Caco-2 (cell line): ENCODE measurements at regions of chr2 and their contacts with region 1.

Region 1: GRCh38 chr2:67476809-67477790 is 80.0 kb downstream of the ETAA1 start:
- DNase-seq: peak in 1 of 2 experiments; percentile 28
- H3K4me3 ChIP-seq: no peak overlapping the region
- H3K4me3 Mint-ChIP-seq: no peak overlapping the region
- H3K27ac Mint-ChIP-seq: no peak overlapping the region
- H3K4me1 ChIP-seq: no peaks in the 10 kb centered on the region
- H3K4me1 Mint-ChIP-seq: no peaks in the 10 kb centered on the region
- H3K27me3 ChIP-seq: no peaks in the 10 kb centered on the region; the same call in 1 of the 2 replicates
- H3K27me3 Mint-ChIP-seq: peaks cover 4% of the 10 kb centered on the region
- CTCF ChIP-seq: peak; percentile 50 to 67

Region 2: DNA sequence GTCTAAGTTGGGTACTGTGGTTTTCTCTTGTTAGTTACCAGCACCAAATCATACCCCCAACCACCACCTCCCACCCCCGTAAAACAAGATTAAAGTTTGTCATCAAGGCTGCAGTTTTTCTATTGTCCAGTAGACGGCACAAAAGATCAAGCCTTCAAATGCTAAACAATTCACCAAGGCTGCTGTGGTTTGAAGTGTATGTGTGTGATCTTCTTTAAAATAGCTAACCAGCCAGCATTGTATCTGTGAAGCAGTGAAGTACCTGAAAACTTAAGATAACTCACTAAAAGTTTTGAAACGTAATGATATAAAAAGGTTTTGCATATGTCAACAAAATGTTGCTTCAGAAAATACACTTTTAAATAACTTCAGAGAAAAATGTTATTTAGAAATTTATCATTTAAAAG is 1048.0 kb before region 1 on chr2:
- CTCF ChIA-PET with region 1: no interaction called
- POLR2A ChIA-PET with region 1: no interaction called
- intact Hi-C with region 1: loop called (anchors 5 kb)
- DNase-seq: peak in 1 of 2 experiments; percentile 56
- H3K4me3 ChIP-seq: no peak overlapping the region
- H3K4me3 Mint-ChIP-seq: no peak overlapping the region
- H3K27ac Mint-ChIP-seq: no peak overlapping the region
- H3K4me1 ChIP-seq: peaks cover 25% of the 10 kb centered on the region
- H3K4me1 Mint-ChIP-seq: peaks cover 16% of the 10 kb centered on the region
- H3K27me3 ChIP-seq: no peaks in the 10 kb centered on the region
- H3K27me3 Mint-ChIP-seq: no peaks in the 10 kb centered on the region
- CTCF ChIP-seq: peak; percentile 86 to 92

Region 3: DNA sequence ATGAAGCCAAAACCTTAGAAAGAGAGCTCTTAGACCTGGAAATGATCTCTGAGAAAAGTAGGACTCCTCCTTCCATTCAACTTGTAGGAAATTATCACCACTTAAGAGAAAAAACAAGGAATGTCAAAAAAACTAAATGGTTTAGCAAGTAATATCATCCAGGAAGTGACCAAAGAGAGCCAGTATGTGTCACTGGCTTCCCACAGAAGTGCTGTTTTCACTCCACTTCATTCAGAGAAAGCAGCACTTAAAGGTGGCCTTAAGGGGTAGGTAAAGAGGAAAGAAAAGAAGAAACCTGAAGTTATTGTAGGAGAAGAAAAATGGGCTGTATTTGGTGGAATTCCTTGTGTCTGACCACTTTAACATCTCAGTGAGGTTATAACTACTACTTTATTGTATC is 494.3 kb before region 1 on chr2:
- CTCF ChIA-PET with region 1: no interaction called
- POLR2A ChIA-PET with region 1: no interaction called
- intact Hi-C with region 1: no loop called
- DNase-seq: no peak
- H3K4me3 ChIP-seq: no peak overlapping the region
- H3K4me3 Mint-ChIP-seq: no peak overlapping the region
- H3K27ac Mint-ChIP-seq: no peak overlapping the region
- H3K4me1 ChIP-seq: no peaks in the 10 kb centered on the region
- H3K4me1 Mint-ChIP-seq: no peaks in the 10 kb centered on the region
- H3K27me3 ChIP-seq: no peaks in the 10 kb centered on the region
- H3K27me3 Mint-ChIP-seq: no peaks in the 10 kb centered on the region
- CTCF ChIP-seq: no peak

Region 4: GRCh38 chr2:67234439-67234838 is 242.7 kb before region 1 on chr2:
- CTCF ChIA-PET with region 1: no interaction called
- POLR2A ChIA-PET with region 1: no interaction called
- intact Hi-C with region 1: loop called (anchors 2 kb)
- DNase-seq: peak in 1 of 2 experiments; percentile 47
- H3K4me3 ChIP-seq: no peak overlapping the region
- H3K4me3 Mint-ChIP-seq: no peak overlapping the region
- H3K27ac Mint-ChIP-seq: no peak overlapping the region
- H3K4me1 ChIP-seq: no peaks in the 10 kb centered on the region
- H3K4me1 Mint-ChIP-seq: no peaks in the 10 kb centered on the region
- H3K27me3 ChIP-seq: no peaks in the 10 kb centered on the region
- H3K27me3 Mint-ChIP-seq: peaks cover 6% of the 10 kb centered on the region
- CTCF ChIP-seq: peak; percentile 50 to 67

Region 5: GRCh38 chr2:67277450-67277849 is 199.7 kb before region 1 on chr2:
- CTCF ChIA-PET with region 1: no interaction called
- POLR2A ChIA-PET with region 1: no interaction called
- intact Hi-C with region 1: loop called (anchors 1 kb)
- DNase-seq: peak; percentile 20 to 35
- H3K4me3 ChIP-seq: no peak overlapping the region
- H3K4me3 Mint-ChIP-seq: no peak overlapping the region
- H3K27ac Mint-ChIP-seq: no peak overlapping the region
- H3K4me1 ChIP-seq: no peaks in the 10 kb centered on the region
- H3K4me1 Mint-ChIP-seq: no peaks in the 10 kb centered on the region
- H3K27me3 ChIP-seq: no peaks in the 10 kb centered on the region
- H3K27me3 Mint-ChIP-seq: peaks cover 3% of the 10 kb centered on the region
- CTCF ChIP-seq: peak in 1 of 2 experiments; percentile 25

Region 6: GRCh38 chr2:67329513-67329912 is 147.6 kb before region 1 on chr2:
- CTCF ChIA-PET with region 1: no interaction called
- POLR2A ChIA-PET with region 1: no interaction called
- intact Hi-C with region 1: no loop called
- DNase-seq: no peak
- H3K4me3 ChIP-seq: no peak overlapping the region
- H3K4me3 Mint-ChIP-seq: no peak overlapping the region
- H3K27ac Mint-ChIP-seq: no peak overlapping the region
- H3K4me1 ChIP-seq: no peaks in the 10 kb centered on the region
- H3K4me1 Mint-ChIP-seq: no peaks in the 10 kb centered on the region
- H3K27me3 ChIP-seq: no peaks in the 10 kb centered on the region
- H3K27me3 Mint-ChIP-seq: peaks cover 15% of the 10 kb centered on the region
- CTCF ChIP-seq: no peak

Region 7: DNA sequence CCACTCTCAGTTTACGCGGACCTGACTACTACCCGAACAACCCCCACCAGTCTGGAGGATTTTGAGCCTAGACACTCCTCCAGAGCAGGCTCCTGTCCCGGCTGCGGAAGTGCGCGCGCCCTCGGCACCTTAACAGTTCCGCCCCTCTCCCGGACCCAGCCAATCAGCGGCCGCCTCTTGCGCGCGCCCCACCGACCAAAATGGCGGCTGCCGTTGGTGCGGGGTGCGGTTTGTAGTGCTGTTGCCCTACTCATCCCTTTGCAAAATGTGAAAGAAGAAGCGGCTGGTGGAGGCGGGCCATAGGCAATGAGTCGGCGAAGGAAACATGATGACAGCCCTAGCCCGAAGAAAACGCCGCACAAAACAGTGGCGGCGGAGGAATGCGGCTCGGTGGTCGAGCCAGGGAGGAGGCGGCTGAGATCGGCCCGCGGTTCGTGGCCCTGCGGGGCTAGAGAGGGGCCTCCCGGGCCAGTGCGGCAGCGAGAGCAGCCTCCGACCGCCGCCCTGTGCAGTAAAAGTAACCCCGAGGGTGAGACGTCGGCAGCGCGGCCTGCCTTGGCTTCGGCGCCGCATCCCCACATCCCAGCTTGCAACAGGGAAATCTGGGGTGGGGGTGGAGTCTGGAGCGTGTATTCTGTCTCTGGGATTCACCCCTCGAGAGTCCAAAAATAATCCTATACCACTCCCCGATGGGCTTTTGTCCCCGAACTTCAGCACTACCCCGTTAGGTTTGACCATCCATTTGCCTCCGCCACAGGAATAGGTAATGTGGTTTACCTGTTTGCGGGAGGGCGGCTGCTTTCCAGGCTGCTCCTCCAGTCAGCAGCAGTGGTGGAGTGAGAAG is 79.7 kb before region 1 on chr2 and contains the start of gene ETAA1:
- CTCF ChIA-PET with region 1: no interaction called
- POLR2A ChIA-PET with region 1: no interaction called
- intact Hi-C with region 1: loop called (anchors 2 kb)
- DNase-seq: peak; percentile 93 to 94
- H3K4me3 ChIP-seq: peak within 1 kb of the TSS; percentile 92
- H3K4me3 Mint-ChIP-seq: peak within 1 kb of the TSS; percentile 94
- H3K27ac Mint-ChIP-seq: peak within 1 kb of the TSS; percentile 95
- H3K4me1 ChIP-seq: peaks cover 28% of the 10 kb centered on the region
- H3K4me1 Mint-ChIP-seq: peaks cover 12% of the 10 kb centered on the region
- H3K27me3 ChIP-seq: no peaks in the 10 kb centered on the region
- H3K27me3 Mint-ChIP-seq: no peaks in the 10 kb centered on the region
- CTCF ChIP-seq: no peak
- total RNA-seq, gene ETAA1: 11.4 and 12.4 TPM in 2 replicates

Region 8: GRCh38 chr2:67451086-67451832 is 25.8 kb before region 1 on chr2:
- CTCF ChIA-PET with region 1: no interaction called
- POLR2A ChIA-PET with region 1: no interaction called
- intact Hi-C with region 1: no loop called
- DNase-seq: no peak
- H3K4me3 ChIP-seq: no peak overlapping the region
- H3K4me3 Mint-ChIP-seq: no peak overlapping the region
- H3K27ac Mint-ChIP-seq: no peak overlapping the region
- H3K4me1 ChIP-seq: peaks cover 23% of the 10 kb centered on the region
- H3K4me1 Mint-ChIP-seq: peaks cover 31% of the 10 kb centered on the region
- H3K27me3 ChIP-seq: no peaks in the 10 kb centered on the region
- H3K27me3 Mint-ChIP-seq: no peaks in the 10 kb centered on the region
- CTCF ChIP-seq: no peak

Region 9: GRCh38 chr2:67650291-67651133 is 173.4 kb after region 1 on chr2:
- CTCF ChIA-PET with region 1: no interaction called
- POLR2A ChIA-PET with region 1: no interaction called
- intact Hi-C with region 1: loop called (anchors 10 kb)
- DNase-seq: peak; percentile 63 to 64
- H3K4me3 ChIP-seq: no peak overlapping the region
- H3K4me3 Mint-ChIP-seq: no peak overlapping the region
- H3K27ac Mint-ChIP-seq: no peak overlapping the region
- H3K4me1 ChIP-seq: no peaks in the 10 kb centered on the region
- H3K4me1 Mint-ChIP-seq: no peaks in the 10 kb centered on the region
- H3K27me3 ChIP-seq: no peaks in the 10 kb centered on the region
- H3K27me3 Mint-ChIP-seq: peaks cover 4% of the 10 kb centered on the region
- CTCF ChIP-seq: peak; percentile 20 to 47

Region 10: DNA sequence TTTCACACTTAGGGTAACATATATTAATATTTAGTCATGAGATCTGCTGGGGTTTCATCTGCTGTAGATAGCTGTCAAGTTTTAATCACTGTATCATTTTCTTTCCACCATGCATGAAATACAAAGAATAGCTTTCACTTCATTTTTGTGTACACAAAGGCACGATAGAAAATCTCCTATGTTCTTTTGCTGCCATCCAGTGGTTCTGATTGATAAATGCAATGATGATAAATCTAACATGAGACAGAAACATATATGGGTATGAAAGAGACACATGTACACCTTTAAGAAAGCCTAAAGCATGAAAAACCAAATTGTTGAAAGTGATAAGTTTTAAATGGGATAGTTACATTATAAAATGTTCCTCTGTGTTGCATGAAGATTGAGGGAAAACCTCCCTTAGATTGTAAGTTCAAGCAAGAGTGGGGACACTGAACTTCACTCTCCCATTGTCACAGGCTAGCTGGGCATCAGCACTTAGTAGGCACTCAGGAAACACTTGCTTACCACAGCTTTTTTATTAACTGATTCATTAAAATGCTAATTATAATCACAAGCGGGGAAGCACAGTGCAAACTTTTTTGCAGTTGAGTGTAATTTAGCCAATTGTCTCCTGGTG is 554.6 kb after region 1 on chr2:
- CTCF ChIA-PET with region 1: no interaction called
- POLR2A ChIA-PET with region 1: no interaction called
- intact Hi-C with region 1: loop called (anchors 2 kb)
- DNase-seq: peak in 1 of 2 experiments; percentile 54
- H3K4me3 ChIP-seq: no peak overlapping the region
- H3K4me3 Mint-ChIP-seq: no peak overlapping the region
- H3K27ac Mint-ChIP-seq: no peak overlapping the region
- H3K4me1 ChIP-seq: no peaks in the 10 kb centered on the region
- H3K4me1 Mint-ChIP-seq: no peaks in the 10 kb centered on the region
- H3K27me3 ChIP-seq: no peaks in the 10 kb centered on the region
- H3K27me3 Mint-ChIP-seq: no peaks in the 10 kb centered on the region
- CTCF ChIP-seq: peak; percentile 40 to 69